ENCODE measurements at regions of chr7 and their contacts with region 1.

Region 1: DNA sequence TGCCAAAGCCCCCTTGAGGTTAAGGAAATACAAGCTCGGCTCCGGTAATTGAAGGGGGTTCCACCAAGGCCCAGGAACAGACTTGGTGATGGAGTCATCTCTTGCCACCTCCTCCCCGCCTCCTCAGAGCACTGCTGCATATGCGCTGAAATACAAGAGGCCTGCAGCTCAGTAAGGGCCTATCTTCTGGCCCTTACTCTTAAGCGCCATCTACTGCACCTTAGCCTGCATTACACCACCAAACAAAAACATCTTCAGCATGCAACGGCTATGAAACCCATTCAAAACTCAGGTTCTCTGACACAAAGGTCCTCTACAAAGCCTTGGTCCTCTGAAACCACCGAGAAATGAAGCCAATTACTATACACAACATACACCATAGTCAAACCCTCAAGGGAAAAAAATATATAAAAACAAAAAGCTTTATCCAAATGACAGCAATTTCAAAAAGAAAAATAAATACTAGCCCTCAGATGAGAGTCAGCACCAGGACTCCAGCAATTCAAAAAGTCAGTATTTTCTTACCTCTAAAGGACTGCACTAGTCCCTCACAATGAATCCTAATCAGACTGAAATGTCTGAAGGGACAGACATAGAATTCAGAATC is 176.8 kb upstream of the TBX20 start:
- DNase-seq: peak; percentile 61
- H3K4me3 ChIP-seq: no peak overlapping the region
- H3K27ac ChIP-seq: no peak overlapping the region
- H3K4me1 ChIP-seq: no peaks in the 10 kb centered on the region
- CTCF ChIP-seq: peak; percentile 87

Region 2: DNA sequence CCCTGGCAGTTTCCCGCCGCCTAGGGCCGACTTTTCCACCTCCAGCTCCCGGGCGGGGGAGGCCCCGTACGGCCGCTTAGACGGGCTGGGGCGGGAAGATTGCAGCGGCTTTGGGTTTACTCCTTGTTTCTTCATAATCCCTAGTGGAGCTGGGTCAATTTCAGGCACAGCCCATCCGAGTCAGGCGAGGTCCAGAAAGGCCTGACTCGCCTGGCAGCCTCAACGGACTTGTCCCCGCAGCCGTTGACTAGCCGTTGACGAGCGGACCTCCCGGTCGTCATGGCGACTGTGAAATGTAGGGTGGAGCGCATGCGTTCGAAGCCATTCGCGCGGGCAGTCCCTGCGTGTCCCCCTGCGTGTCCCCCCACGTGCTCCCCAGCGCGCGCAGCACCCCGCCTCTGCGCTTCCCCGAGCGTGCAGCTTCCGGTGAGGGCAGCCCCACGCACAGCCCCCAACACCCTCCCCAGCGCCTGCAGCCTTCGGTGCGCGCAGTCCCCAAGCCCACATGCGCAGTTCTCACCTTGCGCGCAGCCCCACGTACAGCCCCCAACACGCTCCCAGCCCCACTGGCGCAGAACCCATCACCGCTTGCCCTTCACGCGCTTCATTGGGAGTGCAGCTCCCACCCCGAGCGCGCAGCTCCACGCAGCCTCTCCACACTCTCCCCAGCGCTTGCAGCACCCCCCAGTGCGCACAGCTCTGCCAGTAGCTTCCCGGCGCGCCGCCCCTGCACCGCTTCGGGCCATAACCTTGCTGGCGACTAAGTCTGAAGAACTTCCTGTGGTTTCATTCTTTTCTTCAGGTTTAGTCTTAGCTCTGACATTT is 244.5 kb before region 1 on chr7:
- CTCF ChIA-PET with region 1: no interaction called
- POLR2A ChIA-PET with region 1: no interaction called
- intact Hi-C with region 1: loop called (anchors 1 kb)
- DNase-seq: no peak
- H3K4me3 ChIP-seq: no peak overlapping the region
- H3K27ac ChIP-seq: no peak overlapping the region
- H3K4me1 ChIP-seq: no peaks in the 10 kb centered on the region
- CTCF ChIP-seq: no peak

Region 3: GRCh38 chr7:35465791-35466336 is 35.2 kb after region 1 on chr7:
- CTCF ChIA-PET with region 1: no interaction called
- POLR2A ChIA-PET with region 1: no interaction called
- intact Hi-C with region 1: no loop called
- DNase-seq: no peak
- H3K4me3 ChIP-seq: no peak overlapping the region
- H3K27ac ChIP-seq: no peak overlapping the region
- H3K4me1 ChIP-seq: peaks cover 10% of the 10 kb centered on the region
- CTCF ChIP-seq: no peak

Measured in OCI-LY7 (cell line).